GM12878 (cell line): ENCODE measurements at regions of chr9 and their contacts with region 1.

Region 1: DNA sequence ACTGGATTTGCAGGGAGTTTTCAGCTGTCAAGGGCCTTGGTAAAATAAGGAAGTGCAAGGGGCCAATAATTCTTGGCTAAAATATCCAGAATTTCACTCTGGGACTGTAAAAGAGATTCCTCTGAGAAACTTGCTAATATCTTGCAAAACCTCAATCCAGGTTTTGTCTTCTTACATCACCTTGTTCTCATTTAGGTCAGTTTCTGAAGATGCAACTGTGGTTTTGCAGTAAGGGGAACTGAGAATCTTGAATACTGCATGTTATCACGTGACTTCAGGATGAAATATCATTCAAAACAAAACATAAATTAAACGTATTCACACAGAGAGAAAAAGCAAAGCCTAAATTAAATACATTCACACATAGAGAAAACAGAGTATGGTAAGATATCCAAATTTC is 35.0 kb upstream of the RIC1 start:
- DNase-seq: peak; percentile 90
- ATAC-seq: peak; percentile 55
- H3K4me3 ChIP-seq: 0 out of 2 replicates have a peak overlapping the region, but pooled peaks have one; percentile 9
- H3K27ac ChIP-seq: peak overlapping the region; percentile 93
- H3K4me1 ChIP-seq: peaks cover 51% of the 10 kb centered on the region
- H3K27me3 ChIP-seq: no peaks in the 10 kb centered on the region
- CTCF ChIP-seq: no peak
- EP300 ChIP-seq: peak; percentile 100
- POLR2A ChIP-seq: no peak
- RAD21 ChIP-seq: peak; percentile 11; the same call in 1 of the 2 replicates

Region 2: GRCh38 chr9:4762108-4762885 is 831.6 kb before region 1 on chr9:
- CTCF ChIA-PET with region 1: interaction called, 16 read pairs
- POLR2A ChIA-PET with region 1: no interaction called
- RAD21 ChIA-PET with region 1: interaction called, 11 read pairs
- SMC1A ChIA-PET with region 1: interaction called, 8 read pairs
- in situ Hi-C with region 1: loop called (anchors 5 kb)
- intact Hi-C with region 1: loop called (anchors 2 kb)
- DNase-seq: peak; percentile 81
- ATAC-seq: peak; percentile 92
- H3K4me3 ChIP-seq: peak overlapping the region; percentile 56
- H3K27ac ChIP-seq: peak overlapping the region; percentile 60
- H3K4me1 ChIP-seq: peaks cover 18% of the 10 kb centered on the region
- H3K27me3 ChIP-seq: no peaks in the 10 kb centered on the region
- CTCF ChIP-seq: peak; percentile 71 to 84 (median 84); a peak in 5 of 6 replicates
- EP300 ChIP-seq: peak in 1 of 2 experiments; percentile 41; a peak in 1 of 4 replicates
- POLR2A ChIP-seq: no peak
- RAD21 ChIP-seq: peak; percentile 96

Region 3: DNA sequence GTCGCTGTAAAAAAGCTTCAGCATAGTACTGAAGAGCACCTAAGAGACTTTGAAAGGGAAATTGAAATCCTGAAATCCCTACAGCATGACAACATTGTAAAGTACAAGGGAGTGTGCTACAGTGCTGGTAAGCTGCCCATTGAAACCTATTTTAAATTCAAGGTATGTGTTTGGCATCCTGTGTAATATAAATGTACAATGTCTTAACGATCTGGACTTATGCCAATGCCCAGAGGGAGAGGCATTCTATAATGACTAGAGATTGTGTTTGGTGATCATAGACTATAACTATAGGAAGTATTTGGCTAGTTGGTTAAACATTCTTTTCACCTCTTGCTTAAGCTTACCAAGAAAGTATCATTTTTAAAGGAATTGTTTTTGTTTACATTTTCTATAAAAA is 504.2 kb before region 1 on chr9:
- CTCF ChIA-PET with region 1: no interaction called
- POLR2A ChIA-PET with region 1: no interaction called
- RAD21 ChIA-PET with region 1: no interaction called
- SMC1A ChIA-PET with region 1: no interaction called
- in situ Hi-C with region 1: no loop called
- intact Hi-C with region 1: loop called (anchors 5 kb)
- DNase-seq: no peak
- ATAC-seq: no peak
- H3K4me3 ChIP-seq: no peak overlapping the region
- H3K27ac ChIP-seq: no peak overlapping the region
- H3K4me1 ChIP-seq: no peaks in the 10 kb centered on the region
- H3K27me3 ChIP-seq: no peaks in the 10 kb centered on the region
- CTCF ChIP-seq: no peak
- EP300 ChIP-seq: no peak
- POLR2A ChIP-seq: no peak
- RAD21 ChIP-seq: no peak

Region 4: DNA sequence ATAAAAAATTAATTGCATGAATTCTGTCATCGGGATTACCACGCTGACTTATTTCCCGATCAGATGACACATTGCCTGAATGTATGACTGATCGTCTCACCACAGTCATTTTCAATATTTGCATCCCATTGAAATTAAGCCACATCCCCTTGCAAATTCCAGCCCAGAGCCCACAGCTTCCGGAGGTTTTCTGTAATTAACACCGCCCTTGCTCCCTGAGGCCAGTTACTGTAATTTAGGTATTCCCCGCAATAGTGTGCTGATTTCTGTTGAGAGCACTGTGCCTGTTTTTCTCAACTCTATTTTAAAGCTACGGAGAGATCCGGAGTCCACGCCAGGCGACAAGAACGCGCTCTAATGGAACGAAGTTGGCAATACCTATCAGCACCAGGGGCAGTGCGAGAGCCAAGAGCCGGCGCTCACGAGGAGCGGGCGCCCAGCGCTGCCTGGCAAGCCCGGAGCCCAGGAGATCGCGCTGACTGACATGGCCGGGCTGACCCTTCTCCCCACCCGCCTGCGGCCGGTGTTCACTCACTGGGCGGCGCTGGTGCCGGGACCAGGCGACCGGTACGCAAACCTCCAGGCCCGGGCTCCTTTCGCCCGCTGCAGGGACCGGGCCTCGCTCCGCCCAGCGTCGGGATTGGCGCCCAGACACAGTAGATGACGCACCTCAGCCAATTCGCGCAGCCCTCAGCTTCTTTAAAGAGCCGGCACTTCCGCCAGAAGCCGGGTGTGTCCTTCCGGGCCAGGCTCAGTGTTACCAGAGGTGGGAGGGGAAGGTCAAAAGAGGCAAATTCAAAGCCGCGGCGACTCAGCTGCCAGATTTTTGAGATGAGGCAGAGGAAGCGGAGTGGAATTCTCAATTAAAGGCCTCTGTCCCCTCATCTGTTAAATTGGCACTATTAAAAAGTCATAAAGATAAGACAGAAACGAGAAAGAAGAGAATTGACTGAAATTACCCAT is 156.4 kb before region 1 on chr9 and contains the start of gene PLGRKT:
- CTCF ChIA-PET with region 1: interaction called, 124 read pairs
- POLR2A ChIA-PET with region 1: interaction called, 31 read pairs
- RAD21 ChIA-PET with region 1: interaction called, 130 read pairs
- SMC1A ChIA-PET with region 1: interaction called, 187 read pairs
- in situ Hi-C with region 1: no loop called
- intact Hi-C with region 1: loop called (anchors 5 kb)
- DNase-seq: peak; percentile 81
- ATAC-seq: peak; percentile 88
- H3K4me3 ChIP-seq: peak within 1 kb of the TSS; percentile 86
- H3K27ac ChIP-seq: peak within 1 kb of the TSS; percentile 96
- H3K4me1 ChIP-seq: peaks cover 7% of the 10 kb centered on the region
- H3K27me3 ChIP-seq: no peaks in the 10 kb centered on the region
- CTCF ChIP-seq: peak; percentile 17 to 31 (median 17); a peak in 3 of 6 replicates
- EP300 ChIP-seq: peak in 1 of 2 experiments; percentile 37; a peak in 1 of 4 replicates
- POLR2A ChIP-seq: peak; percentile 95
- RAD21 ChIP-seq: no peak
- polyA plus RNA-seq, gene PLGRKT: 62.2 to 64.4 TPM

Region 5: DNA sequence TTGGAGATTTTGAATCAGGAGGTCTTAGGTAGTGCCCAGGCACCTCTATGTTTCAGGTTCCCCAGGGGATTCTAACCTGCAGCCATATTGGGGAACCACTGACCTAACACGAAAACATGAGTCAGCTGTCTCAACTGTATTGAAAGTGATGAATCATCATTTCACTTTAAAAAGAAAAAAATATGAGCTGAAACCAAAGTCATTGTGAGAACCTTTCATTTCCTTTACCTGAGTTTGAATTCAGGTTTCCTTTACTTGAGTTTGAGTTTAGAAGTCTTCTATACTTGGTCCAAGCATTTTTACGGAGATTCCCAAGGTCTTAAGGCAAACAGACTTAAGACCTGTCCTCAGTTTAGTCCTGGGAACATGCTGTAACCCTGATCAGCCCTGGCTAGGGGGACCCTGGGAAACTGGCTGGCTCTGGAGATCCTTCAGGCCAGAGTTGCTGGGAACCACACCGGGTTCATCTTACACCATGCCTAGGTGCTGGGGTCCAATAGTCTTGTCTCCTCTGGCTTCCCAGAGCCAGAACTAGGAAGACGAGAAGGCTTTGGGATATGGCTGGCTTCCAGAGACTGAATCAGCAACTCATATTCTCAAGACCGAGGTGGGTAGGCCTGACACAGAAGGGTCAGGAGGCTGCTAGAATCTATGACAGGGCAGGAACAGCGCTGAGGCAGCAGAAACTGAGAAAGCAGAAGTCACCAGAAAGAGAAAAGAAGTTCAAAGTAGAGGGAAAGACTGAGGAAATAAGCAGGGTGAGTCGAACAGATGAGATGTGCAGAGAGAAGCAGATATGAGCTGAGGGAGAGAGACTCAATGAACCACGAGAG is 100.0 kb before region 1 on chr9:
- CTCF ChIA-PET with region 1: interaction called, 4 read pairs
- POLR2A ChIA-PET with region 1: no interaction called
- RAD21 ChIA-PET with region 1: interaction called, 15 read pairs
- SMC1A ChIA-PET with region 1: interaction called, 46 read pairs
- in situ Hi-C with region 1: no loop called
- intact Hi-C with region 1: no loop called
- DNase-seq: peak; percentile 96
- ATAC-seq: peak; percentile 91
- H3K4me3 ChIP-seq: peak overlapping the region; percentile 30; the same call in 1 of the 2 replicates
- H3K27ac ChIP-seq: peak overlapping the region; percentile 92
- H3K4me1 ChIP-seq: peaks cover 16% of the 10 kb centered on the region
- H3K27me3 ChIP-seq: no peaks in the 10 kb centered on the region
- CTCF ChIP-seq: no peak
- EP300 ChIP-seq: peak in 1 of 2 experiments; percentile 65; a peak in 1 of 4 replicates
- POLR2A ChIP-seq: peak; percentile 63
- RAD21 ChIP-seq: 0 out of 2 replicates have a peak, but pooled peaks have one; percentile 9

Region 6: DNA sequence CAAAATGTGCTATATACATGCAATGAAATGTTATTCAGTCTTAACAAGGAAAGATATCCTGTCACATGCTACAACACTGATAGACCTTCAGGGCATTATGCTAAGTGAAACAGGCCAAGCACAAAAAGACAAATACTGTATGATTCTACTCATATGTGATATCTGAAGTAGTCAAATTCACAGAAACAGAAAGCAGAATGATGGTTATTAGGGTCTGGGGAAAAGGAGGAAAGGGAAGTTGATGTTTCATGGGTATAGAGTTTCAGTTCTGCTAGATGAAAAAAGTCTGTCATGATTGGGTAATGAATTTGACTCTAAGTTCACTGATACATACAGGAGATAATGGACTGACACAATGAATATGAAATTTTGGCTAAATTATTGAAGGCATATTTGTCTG is 23.8 kb after region 1 on chr9:
- CTCF ChIA-PET with region 1: interaction called, 23 read pairs
- POLR2A ChIA-PET with region 1: interaction called, 11 read pairs
- RAD21 ChIA-PET with region 1: interaction called, 16 read pairs
- SMC1A ChIA-PET with region 1: interaction called, 7 read pairs
- in situ Hi-C with region 1: no loop called
- intact Hi-C with region 1: no loop called
- DNase-seq: peak; percentile 92
- ATAC-seq: peak; percentile 96
- H3K4me3 ChIP-seq: peak overlapping the region; percentile 21; the same call in 1 of the 2 replicates
- H3K27ac ChIP-seq: peak overlapping the region; percentile 90
- H3K4me1 ChIP-seq: peaks cover 18% of the 10 kb centered on the region
- H3K27me3 ChIP-seq: no peaks in the 10 kb centered on the region
- CTCF ChIP-seq: no peak
- EP300 ChIP-seq: peak in 1 of 2 experiments; percentile 65; a peak in 2 of 4 replicates
- POLR2A ChIP-seq: no peak
- RAD21 ChIP-seq: no peak

Region 7: DNA sequence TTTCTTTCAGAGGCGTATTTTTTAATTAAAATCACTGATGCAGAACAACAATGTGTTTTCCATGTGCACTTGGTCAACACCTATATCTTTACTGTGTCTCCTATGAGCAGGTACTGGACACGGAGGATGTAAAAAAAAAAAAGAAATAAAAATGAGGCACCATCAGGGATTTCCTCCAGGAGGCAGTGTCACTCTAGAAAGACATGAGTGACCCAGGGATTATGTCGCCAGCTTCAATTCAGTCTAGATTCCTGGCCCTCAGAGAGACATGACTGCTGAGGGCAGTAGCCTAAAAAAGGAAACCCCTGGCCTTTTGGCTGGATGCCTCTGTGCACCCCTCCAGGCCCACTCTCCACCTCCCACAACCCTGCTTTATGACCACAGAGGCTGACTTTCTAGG is 603.4 kb after region 1 on chr9:
- CTCF ChIA-PET with region 1: no interaction called
- POLR2A ChIA-PET with region 1: no interaction called
- RAD21 ChIA-PET with region 1: no interaction called
- SMC1A ChIA-PET with region 1: no interaction called
- in situ Hi-C with region 1: no loop called
- intact Hi-C with region 1: no loop called
- DNase-seq: no peak
- ATAC-seq: peak; percentile 47
- H3K4me3 ChIP-seq: no peak overlapping the region
- H3K27ac ChIP-seq: no peak overlapping the region
- H3K4me1 ChIP-seq: peaks cover 4% of the 10 kb centered on the region; the same call in 1 of the 2 replicates
- H3K27me3 ChIP-seq: no peaks in the 10 kb centered on the region; a peak in 1 of 4 replicates
- CTCF ChIP-seq: peak; percentile 18 to 28 (median 23); a peak in 3 of 6 replicates
- EP300 ChIP-seq: no peak
- POLR2A ChIP-seq: no peak
- RAD21 ChIP-seq: peak; percentile 57